ENCODE measurements at regions of chr19 and their contacts with region 1.

Region 1: DNA sequence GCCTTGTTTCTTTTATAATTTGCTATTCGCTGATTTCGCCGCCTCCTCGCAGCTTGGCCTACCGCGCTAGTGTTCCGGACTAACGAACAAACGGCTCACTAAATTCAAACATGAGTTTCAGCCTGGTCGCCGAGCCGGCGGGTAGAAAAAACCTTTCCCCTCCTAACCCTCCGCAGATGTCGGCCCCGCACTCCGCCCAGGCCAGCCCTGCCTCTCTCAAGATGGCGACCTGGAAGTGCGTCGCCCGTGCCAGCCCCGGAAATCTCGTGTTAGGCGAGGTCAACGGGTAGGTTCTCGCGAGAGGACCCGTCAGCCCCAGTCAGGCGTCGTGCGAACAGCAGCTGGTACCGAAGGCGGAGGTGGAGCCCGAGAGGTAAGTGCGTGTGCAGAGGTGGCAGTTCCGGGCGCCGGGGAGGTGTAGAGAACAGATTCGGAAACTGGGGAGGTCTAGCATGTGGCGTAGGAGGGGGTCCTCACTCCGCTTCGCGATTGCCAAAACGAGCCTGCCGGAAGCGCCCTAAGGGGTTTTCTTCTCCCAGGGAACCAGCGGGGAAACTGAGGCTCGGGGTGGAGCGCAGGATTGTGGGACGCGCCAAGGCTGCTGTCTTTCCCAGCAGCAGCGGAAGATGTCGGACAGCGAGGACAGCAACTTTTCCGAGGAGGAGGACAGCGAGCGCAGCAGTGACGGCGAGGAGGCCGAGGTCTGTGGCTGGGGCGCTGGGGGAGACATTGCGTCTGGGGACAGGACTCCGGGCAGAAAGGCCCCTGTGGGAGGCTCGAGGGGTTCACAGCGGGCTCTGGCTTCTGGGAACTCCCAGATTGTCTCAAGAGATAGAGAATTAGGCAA is at the start of gene SUPT5H:
- H3K4me3 ChIP-seq: peak within 1 kb of the TSS; percentile 57
- H3K27ac ChIP-seq: peak within 1 kb of the TSS; percentile 98
- H3K4me1 ChIP-seq: peaks cover 23% of the 10 kb centered on the region
- CTCF ChIP-seq: peak; percentile 61

Region 2: GRCh38 chr19:39390755-39391592 is 54.5 kb before region 1 on chr19 and contains the starts of genes MED29 and PAF1:
- CTCF ChIA-PET with region 1: interaction called, 4 read pairs
- POLR2A ChIA-PET with region 1: interaction called, 13 read pairs
- H3K4me3 ChIP-seq: peak within 1 kb of the TSS; percentile 68
- H3K27ac ChIP-seq: peak within 1 kb of the TSS; percentile 97
- H3K4me1 ChIP-seq: peaks cover 17% of the 10 kb centered on the region
- CTCF ChIP-seq: peak; percentile 100

Region 3: GRCh38 chr19:39423258-39424086 is 22.0 kb before region 1 on chr19:
- CTCF ChIA-PET with region 1: interaction called, 13 read pairs
- POLR2A ChIA-PET with region 1: interaction called, 24 read pairs
- H3K4me3 ChIP-seq: no peak overlapping the region
- H3K27ac ChIP-seq: peak overlapping the region; percentile 47; the same call in 1 of the 2 replicates
- H3K4me1 ChIP-seq: no peaks in the 10 kb centered on the region; the same call in 1 of the 2 replicates
- CTCF ChIP-seq: no peak

Region 4: DNA sequence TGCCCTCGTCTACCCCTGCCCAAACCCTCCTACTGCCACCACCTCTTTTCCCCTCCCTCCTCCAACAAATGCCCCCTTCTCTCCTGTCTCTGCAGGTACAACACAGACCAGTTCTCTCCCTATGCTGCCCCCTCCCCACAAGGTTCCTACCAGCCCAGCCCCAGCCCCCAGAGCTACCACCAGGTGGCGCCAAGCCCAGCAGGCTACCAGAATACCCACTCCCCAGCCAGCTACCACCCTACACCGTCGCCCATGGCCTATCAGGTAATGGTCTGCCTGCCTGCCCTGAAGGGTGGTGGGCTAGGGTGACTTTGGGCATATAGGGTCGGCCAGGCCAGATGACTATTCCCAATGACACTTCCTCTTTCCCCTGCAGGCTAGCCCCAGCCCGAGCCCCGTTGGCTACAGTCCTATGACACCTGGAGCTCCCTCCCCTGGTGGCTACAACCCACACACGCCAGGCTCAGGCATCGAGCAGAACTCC is 28.7 kb after region 1 on chr19:
- CTCF ChIA-PET with region 1: interaction called, 16 read pairs
- POLR2A ChIA-PET with region 1: interaction called, 7 read pairs
- H3K4me3 ChIP-seq: no peak overlapping the region
- H3K27ac ChIP-seq: no peak overlapping the region
- H3K4me1 ChIP-seq: no peaks in the 10 kb centered on the region
- CTCF ChIP-seq: peak; percentile 99

Region 5: GRCh38 chr19:39494661-39495060 is 49.2 kb after region 1 on chr19:
- CTCF ChIA-PET with region 1: interaction called, 20 read pairs
- POLR2A ChIA-PET with region 1: interaction called, 7 read pairs
- H3K4me3 ChIP-seq: no peak overlapping the region
- H3K27ac ChIP-seq: peak overlapping the region; percentile 56
- H3K4me1 ChIP-seq: peaks cover 16% of the 10 kb centered on the region
- CTCF ChIP-seq: no peak

Region 6: GRCh38 chr19:39514840-39515550 is 69.5 kb after region 1 on chr19 and contains the start of gene SELENOV:
- CTCF ChIA-PET with region 1: interaction called, 10 read pairs
- POLR2A ChIA-PET with region 1: interaction called, 5 read pairs
- H3K4me3 ChIP-seq: peak within 1 kb of the TSS; percentile 25
- H3K27ac ChIP-seq: peak within 1 kb of the TSS; percentile 16; the same call in 1 of the 2 replicates
- H3K4me1 ChIP-seq: peaks cover 17% of the 10 kb centered on the region
- CTCF ChIP-seq: peak; percentile 79

Region 7: GRCh38 chr19:39539519-39540332 is 94.2 kb after region 1 on chr19 and contains the start of gene EID2:
- CTCF ChIA-PET with region 1: interaction called, 111 read pairs
- POLR2A ChIA-PET with region 1: no interaction called
- H3K4me3 ChIP-seq: peak within 1 kb of the TSS; percentile 83
- H3K27ac ChIP-seq: peak within 1 kb of the TSS; percentile 97
- H3K4me1 ChIP-seq: peaks cover 16% of the 10 kb centered on the region
- CTCF ChIP-seq: peak; percentile 97